CD4-positive, alpha-beta T cell (primary cell): ENCODE measurements at regions of chr4 and their contacts with region 1.

Region 1: DNA sequence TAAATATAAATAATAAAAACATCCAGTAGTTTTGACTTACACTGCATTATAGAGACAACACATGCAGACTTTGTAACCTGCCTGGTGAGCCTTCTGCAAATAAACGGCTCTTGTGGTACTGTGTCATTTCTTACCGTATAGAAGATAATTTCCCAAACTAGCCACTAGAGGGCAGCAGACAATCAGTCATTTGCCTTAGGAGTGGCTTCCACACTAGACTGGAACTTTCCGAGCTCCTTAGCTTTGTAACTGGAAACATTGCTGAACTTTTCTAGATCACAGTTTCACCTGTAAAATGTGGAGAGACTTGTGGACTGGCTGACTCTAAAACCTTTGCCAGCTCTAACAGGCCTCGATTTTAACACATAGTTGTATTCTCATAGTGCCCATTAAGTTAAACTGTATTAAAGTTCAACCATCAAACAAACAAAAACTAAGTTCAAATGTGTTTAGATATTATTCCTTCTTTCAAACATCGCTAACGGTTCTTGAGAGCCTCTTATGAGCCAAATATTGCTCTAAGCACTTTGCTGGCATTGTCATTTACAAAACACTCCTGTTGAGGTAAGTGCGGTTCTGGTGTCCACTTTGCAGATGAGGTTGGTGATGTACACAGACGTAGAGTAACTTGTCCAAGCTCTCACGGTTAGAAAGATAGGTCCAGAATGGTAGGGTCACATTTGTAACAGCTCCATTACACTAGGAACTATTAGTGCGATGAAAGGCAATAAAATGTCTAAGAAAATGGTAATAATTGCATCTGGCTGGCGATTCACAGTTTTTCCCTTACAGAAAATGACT is 345.5 kb downstream of the ANK2 start:
- DNase-seq: peak in 13 of 14 experiments; percentile 1 to 85 (median 27)
- ATAC-seq: peak; percentile 83
- H3K4me3 ChIP-seq: no peak overlapping the region
- H3K4me3 Mint-ChIP-seq: no peak overlapping the region
- H3K27ac ChIP-seq: no peak overlapping the region
- H3K27ac Mint-ChIP-seq: no peak overlapping the region
- H3K4me1 ChIP-seq: no peaks in the 10 kb centered on the region
- H3K4me1 Mint-ChIP-seq: no peaks in the 10 kb centered on the region
- H3K27me3 ChIP-seq: no peaks in the 10 kb centered on the region
- H3K27me3 Mint-ChIP-seq: no peaks in the 10 kb centered on the region
- CTCF ChIP-seq: peak; percentile 86

Region 2: DNA sequence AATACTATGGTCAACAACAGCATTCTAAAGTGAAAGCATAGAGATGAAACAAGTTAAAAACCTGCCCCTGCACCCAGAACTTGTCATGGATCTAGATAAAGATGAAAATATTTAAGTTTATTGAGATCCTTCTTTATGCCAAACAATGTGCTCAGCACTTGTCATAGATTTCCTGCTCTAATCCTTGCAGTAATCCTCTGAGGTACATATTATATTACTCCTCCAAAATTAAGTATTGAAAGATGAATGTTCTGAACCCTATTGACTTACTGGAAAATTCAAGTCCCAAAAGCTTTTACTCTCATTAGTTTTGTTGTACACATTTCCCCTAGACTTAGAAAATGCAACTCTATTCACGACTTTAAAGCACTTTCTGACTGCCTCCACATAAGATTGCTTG is 331.0 kb after region 1 on chr4:
- CTCF ChIA-PET with region 1: no interaction called
- POLR2A ChIA-PET with region 1: no interaction called
- intact Hi-C with region 1: no loop called
- DNase-seq: no peak
- ATAC-seq: no peak
- H3K4me3 ChIP-seq: no peak overlapping the region
- H3K4me3 Mint-ChIP-seq: no peak overlapping the region
- H3K27ac ChIP-seq: no peak overlapping the region
- H3K27ac Mint-ChIP-seq: no peak overlapping the region
- H3K4me1 ChIP-seq: peaks cover 5% of the 10 kb centered on the region
- H3K4me1 Mint-ChIP-seq: peaks cover 68% of the 10 kb centered on the region
- H3K27me3 ChIP-seq: no peaks in the 10 kb centered on the region
- H3K27me3 Mint-ChIP-seq: no peaks in the 10 kb centered on the region
- CTCF ChIP-seq: no peak

Region 3: DNA sequence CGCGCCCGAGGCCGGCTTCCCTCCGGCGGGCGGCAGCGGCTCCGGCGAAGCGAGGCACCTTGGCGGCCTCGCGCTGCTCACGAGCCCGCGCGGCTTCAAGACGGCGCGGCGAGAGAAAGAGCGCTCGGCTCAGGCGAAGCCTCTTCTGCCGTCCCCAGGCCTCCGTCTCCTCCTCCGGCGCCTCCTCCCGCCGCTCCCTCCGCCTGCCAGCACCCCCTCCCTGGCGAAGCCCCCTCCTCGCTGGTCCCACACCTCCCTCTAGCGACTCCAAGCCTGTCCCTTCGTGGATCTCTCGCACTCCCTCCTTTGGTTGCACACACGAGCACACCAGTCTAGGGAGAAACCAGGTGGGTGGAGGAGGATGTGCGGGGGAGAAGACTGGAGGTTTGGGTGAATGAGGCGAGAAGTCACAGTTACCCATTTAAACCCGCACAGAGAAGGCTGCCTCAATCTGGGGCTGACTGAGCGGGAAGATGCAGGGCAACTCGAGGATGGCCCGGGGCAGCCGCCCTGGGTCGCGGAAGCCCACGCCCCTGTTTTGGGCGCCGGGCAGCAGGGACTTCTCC is 366.8 kb after region 1 on chr4 and contains the start of gene CAMK2D:
- CTCF ChIA-PET with region 1: no interaction called
- POLR2A ChIA-PET with region 1: no interaction called
- intact Hi-C with region 1: loop called in 1 of 2 experiments (anchors 2 kb)
- DNase-seq: peak; percentile 65 to 95 (median 79)
- ATAC-seq: peak; percentile 65
- H3K4me3 ChIP-seq: peak within 1 kb of the TSS; percentile 87
- H3K4me3 Mint-ChIP-seq: peak within 1 kb of the TSS; percentile 95
- H3K27ac ChIP-seq: peak within 1 kb of the TSS; percentile 94 to 96
- H3K27ac Mint-ChIP-seq: peak within 1 kb of the TSS; percentile 95
- H3K4me1 ChIP-seq: peaks cover 7% of the 10 kb centered on the region
- H3K4me1 Mint-ChIP-seq: peaks cover 37% of the 10 kb centered on the region
- H3K27me3 ChIP-seq: no peaks in the 10 kb centered on the region
- H3K27me3 Mint-ChIP-seq: no peaks in the 10 kb centered on the region
- CTCF ChIP-seq: peak; percentile 37
- total RNA-seq, gene CAMK2D: 29.9 to 32.9 TPM

Region 4: GRCh38 chr4:113908829-113909228 is 513.9 kb after region 1 on chr4:
- CTCF ChIA-PET with region 1: no interaction called
- POLR2A ChIA-PET with region 1: no interaction called
- intact Hi-C with region 1: loop called (anchors 1 to 5 kb)
- DNase-seq: peak in 3 of 14 experiments; percentile 49 to 53 (median 51)
- ATAC-seq: peak; percentile 39
- H3K4me3 ChIP-seq: no peak overlapping the region
- H3K4me3 Mint-ChIP-seq: no peak overlapping the region
- H3K27ac ChIP-seq: no peak overlapping the region
- H3K27ac Mint-ChIP-seq: no peak overlapping the region
- H3K4me1 ChIP-seq: peaks cover 14% of the 10 kb centered on the region
- H3K4me1 Mint-ChIP-seq: peaks cover 33% of the 10 kb centered on the region
- H3K27me3 ChIP-seq: no peaks in the 10 kb centered on the region
- H3K27me3 Mint-ChIP-seq: no peaks in the 10 kb centered on the region
- CTCF ChIP-seq: peak; percentile 65

Region 5: DNA sequence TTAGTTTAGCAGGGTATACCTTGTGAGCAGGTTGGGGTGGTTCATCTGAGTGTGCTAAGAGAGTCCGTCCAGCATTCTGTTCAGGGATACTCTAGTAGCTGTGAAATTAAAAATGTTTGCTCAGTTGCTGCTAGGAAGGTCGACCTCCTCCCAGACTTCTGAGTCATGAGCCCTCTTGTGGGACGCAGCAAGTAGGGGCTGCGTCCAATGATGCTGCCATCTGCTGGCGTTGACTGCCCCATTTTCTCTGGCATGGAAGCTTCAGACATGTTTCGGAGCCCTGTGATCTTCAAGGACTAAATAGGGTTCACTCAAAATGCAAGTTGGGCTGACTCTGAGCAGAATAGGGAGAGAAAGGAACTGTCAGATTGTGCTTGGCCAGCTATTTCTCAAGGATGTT is 785.6 kb after region 1 on chr4:
- CTCF ChIA-PET with region 1: no interaction called
- POLR2A ChIA-PET with region 1: no interaction called
- intact Hi-C with region 1: loop called (anchors 2 kb)
- DNase-seq: peak in 10 of 14 experiments; percentile 8 to 54 (median 28)
- ATAC-seq: no peak
- H3K4me3 ChIP-seq: no peak overlapping the region
- H3K4me3 Mint-ChIP-seq: no peak overlapping the region
- H3K27ac ChIP-seq: no peak overlapping the region
- H3K27ac Mint-ChIP-seq: no peak overlapping the region
- H3K4me1 ChIP-seq: no peaks in the 10 kb centered on the region
- H3K4me1 Mint-ChIP-seq: no peaks in the 10 kb centered on the region
- H3K27me3 ChIP-seq: no peaks in the 10 kb centered on the region
- H3K27me3 Mint-ChIP-seq: no peaks in the 10 kb centered on the region
- CTCF ChIP-seq: peak; percentile 41

Region 6: DNA sequence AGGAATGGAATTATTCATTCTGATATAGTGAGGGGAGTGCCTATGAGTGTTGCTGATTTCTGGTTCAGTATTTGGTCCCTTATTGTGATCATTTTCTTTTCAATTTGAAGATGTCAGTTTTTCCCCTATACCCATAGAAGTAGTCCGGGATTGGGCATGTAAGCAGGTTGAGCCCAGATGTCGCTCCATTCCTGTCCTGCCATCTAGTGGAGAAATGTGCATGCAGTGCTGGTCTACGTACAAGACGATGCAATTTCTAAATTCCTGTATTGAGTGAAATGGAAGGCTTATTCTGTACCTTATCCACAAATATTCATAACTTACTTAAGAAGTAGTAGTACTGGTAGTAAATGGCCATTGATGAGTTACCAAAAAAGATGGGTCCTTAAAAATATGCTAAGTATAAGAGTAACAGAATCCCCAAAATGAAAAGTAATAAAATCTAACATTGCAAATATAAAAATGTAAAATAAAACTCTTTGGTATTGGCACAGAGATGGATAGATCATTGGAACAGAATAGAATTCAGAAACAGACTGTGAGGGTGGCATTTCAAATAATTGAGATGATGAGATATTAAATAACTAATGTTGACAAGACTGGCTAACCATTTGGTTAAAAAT is 1264.6 kb after region 1 on chr4:
- CTCF ChIA-PET with region 1: interaction called, 3 read pairs
- POLR2A ChIA-PET with region 1: no interaction called
- intact Hi-C with region 1: loop called in 1 of 2 experiments (anchors 1 kb)
- DNase-seq: peak in 9 of 14 experiments; percentile 1 to 49 (median 4)
- ATAC-seq: peak; percentile 34
- H3K4me3 ChIP-seq: no peak overlapping the region
- H3K4me3 Mint-ChIP-seq: no peak overlapping the region
- H3K27ac ChIP-seq: no peak overlapping the region
- H3K27ac Mint-ChIP-seq: no peak overlapping the region
- H3K4me1 ChIP-seq: no peaks in the 10 kb centered on the region
- H3K4me1 Mint-ChIP-seq: no peaks in the 10 kb centered on the region
- H3K27me3 ChIP-seq: peaks cover 0 to 7% of the 10 kb centered on the region in 2 experiments
- H3K27me3 Mint-ChIP-seq: peaks cover 32% of the 10 kb centered on the region
- CTCF ChIP-seq: peak; percentile 65

Region 7: GRCh38 chr4:114807759-114808404 is 1413.0 kb after region 1 on chr4:
- CTCF ChIA-PET with region 1: interaction called, 4 read pairs
- POLR2A ChIA-PET with region 1: no interaction called
- intact Hi-C with region 1: loop called (anchors 2 to 10 kb)
- DNase-seq: peak in 10 of 14 experiments; percentile 1 to 49 (median 14)
- ATAC-seq: peak; percentile 75
- H3K4me3 ChIP-seq: no peak overlapping the region
- H3K4me3 Mint-ChIP-seq: no peak overlapping the region
- H3K27ac ChIP-seq: no peak overlapping the region
- H3K27ac Mint-ChIP-seq: no peak overlapping the region
- H3K4me1 ChIP-seq: no peaks in the 10 kb centered on the region
- H3K4me1 Mint-ChIP-seq: no peaks in the 10 kb centered on the region
- H3K27me3 ChIP-seq: no peaks in the 10 kb centered on the region
- H3K27me3 Mint-ChIP-seq: peaks cover 10% of the 10 kb centered on the region
- CTCF ChIP-seq: peak; percentile 77